Calu3 (cell line): ENCODE measurements at regions of chr17 and their contacts with region 1.

Region 1: GRCh38 chr17:50689251-50689650 is 18.5 kb downstream of the ANKRD40 start:
- DNase-seq: peak; percentile 60
- H3K4me3 Mint-ChIP-seq: no peak overlapping the region
- H3K27ac Mint-ChIP-seq: peak overlapping the region; percentile 20
- H3K4me1 Mint-ChIP-seq: peaks cover 84% of the 10 kb centered on the region
- H3K27me3 Mint-ChIP-seq: no peaks in the 10 kb centered on the region
- CTCF ChIP-seq: no peak

Region 2: DNA sequence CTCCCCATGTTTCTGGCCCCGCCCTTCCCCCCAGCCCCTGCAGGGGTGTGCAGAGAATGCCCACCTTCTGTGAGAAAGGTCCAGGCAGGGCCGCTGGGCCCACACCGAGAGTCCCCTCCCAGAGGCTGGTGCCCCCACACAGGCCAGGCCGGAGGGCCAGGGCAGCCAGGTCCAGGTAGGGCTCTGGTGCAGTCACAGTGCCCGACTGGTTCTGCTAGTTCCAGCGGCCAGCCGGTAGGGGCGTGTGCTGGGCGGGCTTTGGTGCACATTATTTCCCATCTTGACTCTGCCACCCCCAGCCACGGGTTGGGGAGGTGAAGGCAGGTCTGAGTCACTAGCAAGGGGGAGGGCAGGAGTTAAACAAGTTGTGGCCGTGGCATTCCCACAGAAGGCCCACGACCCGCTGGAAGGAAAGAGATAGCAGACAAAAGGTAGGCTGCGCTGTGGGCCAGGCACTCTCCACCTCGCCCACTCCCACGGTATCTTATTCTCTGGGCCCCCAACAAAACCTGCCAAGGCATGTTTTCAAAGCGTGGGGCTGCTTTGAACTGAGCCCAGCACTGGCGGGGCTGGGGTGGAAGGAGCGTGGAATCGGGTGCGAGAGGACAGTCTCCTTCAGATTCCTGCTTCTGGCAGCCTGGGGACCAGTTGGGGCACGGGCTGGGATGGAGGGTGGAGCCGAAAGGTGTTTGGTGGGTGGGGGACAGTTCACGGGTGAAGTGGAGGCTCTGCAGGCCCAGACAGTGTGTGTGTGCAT is 154.9 kb before region 1 on chr17:
- CTCF ChIA-PET with region 1: no interaction called
- intact Hi-C with region 1: no loop called
- DNase-seq: peak; percentile 92
- H3K4me3 Mint-ChIP-seq: peak overlapping the region; percentile 85
- H3K27ac Mint-ChIP-seq: peak overlapping the region; percentile 63
- H3K4me1 Mint-ChIP-seq: peaks cover 47% of the 10 kb centered on the region
- H3K27me3 Mint-ChIP-seq: peaks cover 5% of the 10 kb centered on the region
- CTCF ChIP-seq: peak; percentile 96

Region 3: DNA sequence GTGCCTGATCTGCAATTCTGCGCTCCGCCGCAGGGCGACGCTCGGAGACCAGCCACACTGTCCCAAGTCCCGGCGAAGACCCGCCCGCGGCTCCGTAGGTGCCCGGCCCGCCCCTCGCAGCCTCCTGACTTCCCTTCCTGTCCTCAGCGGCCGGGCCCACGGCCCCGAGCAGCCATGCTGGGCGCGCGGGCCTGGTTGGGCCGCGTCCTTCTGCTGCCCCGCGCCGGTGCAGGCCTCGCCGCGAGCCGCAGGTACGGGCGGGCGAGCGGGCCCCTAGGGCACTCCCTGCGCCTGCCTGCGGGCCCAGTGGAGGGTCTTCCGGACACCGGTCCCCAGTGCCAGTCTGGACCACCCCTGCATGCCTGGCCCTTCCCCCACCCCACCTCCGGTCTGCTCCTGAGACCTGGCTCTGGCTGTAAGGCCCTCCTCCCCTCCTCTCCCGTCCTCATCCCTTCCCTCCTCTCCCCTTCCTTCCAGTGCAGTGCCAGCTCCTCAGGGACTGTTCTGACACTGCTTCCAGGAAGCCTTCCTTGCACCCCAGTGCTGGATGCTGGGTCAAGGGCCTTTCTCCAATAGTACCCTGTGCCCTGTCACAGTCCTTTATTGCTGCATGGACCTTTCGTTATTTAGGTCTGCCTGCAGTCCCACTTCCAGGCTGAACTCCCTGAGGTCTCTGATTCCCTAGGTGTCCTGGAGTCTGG is 142.1 kb before region 1 on chr17 and contains the start of gene SPATA20:
- CTCF ChIA-PET with region 1: interaction called, 16 read pairs
- intact Hi-C with region 1: loop called (anchors 1 kb)
- DNase-seq: peak; percentile 97
- H3K4me3 Mint-ChIP-seq: peak within 1 kb of the TSS; percentile 60
- H3K27ac Mint-ChIP-seq: peak within 1 kb of the TSS; percentile 24
- H3K4me1 Mint-ChIP-seq: peaks cover 34% of the 10 kb centered on the region
- H3K27me3 Mint-ChIP-seq: no peaks in the 10 kb centered on the region
- CTCF ChIP-seq: peak; percentile 99
- total RNA-seq, gene SPATA20: 33.2 and 47.8 TPM in 2 replicates

Region 4: GRCh38 chr17:50626037-50626574 is 63.1 kb before region 1 on chr17:
- CTCF ChIA-PET with region 1: interaction called, 130 read pairs
- intact Hi-C with region 1: no loop called
- DNase-seq: peak; percentile 89
- H3K4me3 Mint-ChIP-seq: no peak overlapping the region
- H3K27ac Mint-ChIP-seq: no peak overlapping the region
- H3K4me1 Mint-ChIP-seq: peaks cover 28% of the 10 kb centered on the region
- H3K27me3 Mint-ChIP-seq: peaks cover 14% of the 10 kb centered on the region
- CTCF ChIP-seq: peak; percentile 96

Region 5: DNA sequence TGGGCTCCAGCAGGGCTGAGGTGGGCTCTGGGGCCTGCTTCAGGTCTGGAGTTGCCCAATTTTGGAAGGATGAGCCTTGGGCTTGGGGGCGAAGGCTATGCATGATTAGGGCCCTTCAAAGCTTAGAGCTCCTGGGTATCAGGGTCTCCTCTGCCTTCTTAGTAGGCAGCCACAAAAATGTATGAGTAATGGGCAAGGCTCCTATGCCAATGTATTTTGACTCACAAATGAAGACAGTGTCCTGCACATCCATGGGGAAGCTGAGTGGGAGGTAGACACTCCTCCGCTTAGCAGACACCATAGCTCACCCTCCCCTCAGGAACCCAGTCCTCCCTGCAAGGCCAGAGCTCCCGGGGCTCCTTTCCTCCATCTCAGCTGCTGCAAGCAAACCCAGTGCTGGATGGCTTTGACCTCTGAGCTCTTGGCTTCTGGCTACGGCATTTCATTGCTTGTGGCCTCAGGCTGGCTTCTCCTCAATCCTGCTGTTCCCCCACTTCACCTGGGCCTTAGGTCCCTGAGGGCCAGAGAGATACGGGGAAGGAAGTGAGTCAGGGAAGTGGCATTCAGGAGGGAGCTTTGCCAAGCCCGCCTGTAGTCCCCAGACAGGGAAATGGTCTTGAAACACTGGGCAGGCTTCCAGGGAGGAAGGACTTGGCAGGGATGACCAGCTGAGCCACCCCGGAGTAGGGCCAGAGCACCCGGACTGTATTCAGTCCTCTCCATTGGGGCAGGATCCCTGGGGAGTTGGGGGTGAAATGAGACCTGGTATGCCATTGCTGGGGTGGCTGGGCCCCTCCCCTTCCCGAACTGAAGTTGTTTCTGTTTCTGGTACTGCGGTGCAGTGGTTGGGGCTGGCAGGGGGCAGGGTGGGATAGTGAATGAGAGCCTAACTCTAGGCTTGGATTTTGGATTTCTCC is 50.1 kb before region 1 on chr17:
- CTCF ChIA-PET with region 1: interaction called, 78 read pairs
- intact Hi-C with region 1: loop called (anchors 2 kb)
- DNase-seq: peak; percentile 98
- H3K4me3 Mint-ChIP-seq: peak overlapping the region; percentile 69
- H3K27ac Mint-ChIP-seq: peak overlapping the region; percentile 37
- H3K4me1 Mint-ChIP-seq: peaks cover 70% of the 10 kb centered on the region
- H3K27me3 Mint-ChIP-seq: peaks cover under 1% of the 10 kb centered on the region
- CTCF ChIP-seq: no peak

Region 6: DNA sequence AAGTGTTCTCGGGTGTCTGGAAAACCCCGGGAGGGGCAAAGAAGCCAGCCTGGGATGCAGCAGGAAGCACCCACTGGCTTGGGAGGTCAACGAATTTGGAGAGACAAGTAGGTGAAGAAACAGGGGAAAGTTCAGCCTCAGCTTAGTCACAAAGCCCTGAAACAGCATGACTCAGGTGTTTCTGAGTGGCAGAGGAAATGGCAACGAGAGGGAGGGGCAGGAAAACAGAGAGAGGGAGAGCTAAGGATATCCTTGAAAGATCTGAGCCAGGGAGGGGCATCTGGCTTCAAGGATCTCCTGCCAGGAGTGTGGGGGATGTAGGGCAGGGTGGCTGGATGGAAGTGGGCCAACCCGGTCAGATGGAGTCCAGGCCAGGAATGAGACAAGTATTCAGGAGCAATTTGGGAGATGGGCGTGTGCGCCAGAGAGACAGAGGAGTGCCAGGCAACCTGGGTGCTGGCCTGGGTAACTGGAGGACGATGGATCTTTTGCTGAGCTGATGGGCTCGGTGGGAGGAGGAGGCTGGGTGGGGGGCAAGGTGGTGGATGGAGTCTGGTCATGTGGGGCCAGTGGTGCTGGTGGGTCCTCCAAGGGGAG is 27.4 kb before region 1 on chr17:
- CTCF ChIA-PET with region 1: interaction called, 6 read pairs
- intact Hi-C with region 1: loop called (anchors 2 kb)
- DNase-seq: peak; percentile 86
- H3K4me3 Mint-ChIP-seq: peak overlapping the region; percentile 29
- H3K27ac Mint-ChIP-seq: peak overlapping the region; percentile 86
- H3K4me1 Mint-ChIP-seq: peaks cover 49% of the 10 kb centered on the region
- H3K27me3 Mint-ChIP-seq: no peaks in the 10 kb centered on the region
- CTCF ChIP-seq: no peak

Region 7: DNA sequence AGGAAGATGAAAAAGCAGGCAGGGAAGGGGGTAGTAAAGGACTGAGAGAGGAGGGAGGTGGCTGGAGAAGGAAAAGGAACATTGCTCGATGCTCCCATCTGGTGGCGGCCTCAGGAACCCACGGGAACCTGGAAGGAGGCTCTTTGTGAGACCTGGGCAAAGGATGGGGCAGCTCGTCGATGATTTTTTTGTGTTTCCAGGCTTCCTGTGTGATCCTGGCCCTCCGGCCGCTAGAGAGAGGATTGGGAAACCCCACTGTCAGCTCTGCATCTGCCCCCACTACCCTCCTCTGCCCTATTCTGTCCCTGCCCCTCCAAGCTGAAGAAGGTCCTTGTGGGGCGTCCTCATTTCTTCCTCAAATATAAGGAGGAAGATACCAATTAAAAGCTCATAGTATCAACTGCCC is 152.7 kb after region 1 on chr17:
- CTCF ChIA-PET with region 1: no interaction called
- intact Hi-C with region 1: loop called (anchors 10 kb)
- DNase-seq: peak; percentile 91
- H3K4me3 Mint-ChIP-seq: no peak overlapping the region
- H3K27ac Mint-ChIP-seq: no peak overlapping the region
- H3K4me1 Mint-ChIP-seq: peaks cover 8% of the 10 kb centered on the region
- H3K27me3 Mint-ChIP-seq: peaks cover 6% of the 10 kb centered on the region
- CTCF ChIP-seq: peak; percentile 83

Region 8: DNA sequence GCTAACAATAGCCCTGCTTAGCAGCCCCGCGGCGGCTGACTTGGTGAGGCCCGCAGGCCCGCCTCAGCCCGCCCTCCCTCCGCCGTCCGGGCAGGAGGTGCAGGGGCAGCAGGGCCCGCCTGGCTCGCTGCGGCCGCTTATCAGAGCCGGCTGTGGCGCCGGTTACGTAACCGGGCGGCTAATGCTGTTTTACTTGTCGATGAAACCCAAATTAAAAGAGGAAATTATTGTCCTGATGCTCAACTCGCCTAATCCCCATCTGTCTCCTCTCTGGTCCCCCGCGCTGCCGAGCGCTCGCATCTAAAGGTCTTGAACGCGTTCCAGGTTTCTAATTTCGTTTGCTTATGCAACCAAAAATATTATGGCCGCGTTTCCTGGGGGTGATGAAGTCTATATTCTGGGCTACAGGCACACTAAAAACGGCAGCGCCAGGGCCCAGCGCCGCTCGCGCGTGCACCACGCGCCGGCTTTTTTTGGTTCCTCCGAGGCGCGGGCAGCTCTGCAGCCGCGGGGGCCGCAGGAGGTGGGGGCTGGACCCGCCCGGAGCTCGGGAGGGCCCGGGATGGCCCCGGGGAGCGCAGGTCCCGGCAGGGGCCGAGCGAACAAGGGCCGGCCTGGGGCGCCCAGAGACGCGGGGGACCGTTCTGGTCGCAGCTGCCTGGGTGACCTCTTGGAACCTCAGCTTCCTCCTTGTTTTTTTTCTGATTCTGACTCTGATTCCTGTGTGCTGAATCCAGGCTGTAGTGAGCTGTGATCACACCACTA is 242.1 kb after region 1 on chr17:
- CTCF ChIA-PET with region 1: no interaction called
- intact Hi-C with region 1: no loop called
- DNase-seq: peak; percentile 74
- H3K4me3 Mint-ChIP-seq: peak overlapping the region; percentile 65
- H3K27ac Mint-ChIP-seq: no peak overlapping the region
- H3K4me1 Mint-ChIP-seq: peaks cover 18% of the 10 kb centered on the region
- H3K27me3 Mint-ChIP-seq: no peaks in the 10 kb centered on the region
- CTCF ChIP-seq: no peak